GM10248 (cell line): ENCODE measurements at regions of chr11 and their contacts with region 1.

Region 1: DNA sequence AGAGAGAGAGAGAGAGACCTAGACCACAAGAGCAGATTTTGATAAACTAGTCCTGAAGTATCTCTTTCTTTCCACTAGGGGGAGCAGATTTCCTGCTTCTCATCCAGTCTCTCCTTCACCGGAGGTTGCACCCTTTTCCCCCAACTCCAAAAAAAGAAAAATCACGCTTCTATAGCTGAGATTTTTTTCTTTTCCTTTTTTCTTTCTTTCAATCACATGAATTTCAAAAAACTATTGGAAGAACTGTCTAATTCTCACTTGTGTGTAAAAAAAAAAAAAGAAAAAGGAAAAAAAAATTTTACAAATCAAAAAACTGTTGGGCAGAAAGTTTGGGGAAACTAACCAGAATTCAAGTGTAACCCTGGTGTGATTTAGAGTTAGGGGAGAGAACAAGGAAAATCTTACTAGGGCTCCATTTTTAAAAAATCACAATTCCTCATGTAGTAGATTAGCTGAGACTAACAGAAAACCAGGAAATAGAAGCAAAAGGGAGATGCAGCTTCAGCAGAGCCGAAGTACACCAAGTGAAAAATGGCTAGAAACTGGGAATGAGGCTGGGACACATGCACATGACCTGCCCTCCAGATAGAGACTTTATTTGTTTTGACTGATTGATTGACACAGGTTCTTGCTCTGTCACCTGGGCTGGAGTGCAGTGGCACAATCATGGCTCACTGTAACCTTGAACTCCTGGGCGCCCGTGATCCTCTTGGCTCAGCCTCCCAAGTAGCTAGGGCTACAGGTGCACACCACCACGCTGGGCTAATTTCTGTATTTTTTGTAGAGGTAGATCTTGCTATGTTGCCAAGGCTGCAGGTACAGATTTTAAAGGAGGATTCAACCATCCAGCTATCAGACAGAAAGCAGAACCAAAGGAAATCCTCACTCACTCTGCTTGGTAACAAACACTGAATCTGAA is 27.1 kb downstream of the SDHD start:
- DNase-seq: peak; percentile 61
- CTCF ChIP-seq: peak; percentile 61

Region 2: GRCh38 chr11:112074026-112074811 is 39.6 kb before region 1 on chr11 and contains the start of gene NKAPD1:
- CTCF ChIA-PET with region 1: no interaction called
- POLR2A ChIA-PET with region 1: no interaction called
- DNase-seq: peak; percentile 77
- CTCF ChIP-seq: no peak

Region 3: DNA sequence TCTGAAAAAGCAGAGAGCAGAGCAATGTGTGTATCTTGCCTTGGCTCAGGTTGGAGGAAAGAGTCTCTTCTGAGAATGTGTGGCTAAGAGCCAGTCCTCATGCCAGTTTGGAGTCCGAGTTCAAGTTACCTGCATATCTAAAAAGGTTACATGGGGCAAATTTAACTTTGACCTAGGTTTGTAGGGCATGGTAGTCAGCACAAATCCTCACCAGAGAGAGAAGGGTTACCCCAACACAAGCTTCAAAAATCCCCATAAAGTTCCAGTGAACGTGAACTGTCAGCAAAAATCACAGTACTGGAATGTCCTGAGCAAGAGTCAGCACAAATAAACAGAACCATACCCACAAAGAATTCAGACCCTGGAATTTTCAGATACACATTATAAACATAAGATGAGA is 13.3 kb before region 1 on chr11:
- CTCF ChIA-PET with region 1: interaction called, 47 read pairs
- POLR2A ChIA-PET with region 1: no interaction called
- DNase-seq: no peak
- CTCF ChIP-seq: no peak

Region 4: DNA sequence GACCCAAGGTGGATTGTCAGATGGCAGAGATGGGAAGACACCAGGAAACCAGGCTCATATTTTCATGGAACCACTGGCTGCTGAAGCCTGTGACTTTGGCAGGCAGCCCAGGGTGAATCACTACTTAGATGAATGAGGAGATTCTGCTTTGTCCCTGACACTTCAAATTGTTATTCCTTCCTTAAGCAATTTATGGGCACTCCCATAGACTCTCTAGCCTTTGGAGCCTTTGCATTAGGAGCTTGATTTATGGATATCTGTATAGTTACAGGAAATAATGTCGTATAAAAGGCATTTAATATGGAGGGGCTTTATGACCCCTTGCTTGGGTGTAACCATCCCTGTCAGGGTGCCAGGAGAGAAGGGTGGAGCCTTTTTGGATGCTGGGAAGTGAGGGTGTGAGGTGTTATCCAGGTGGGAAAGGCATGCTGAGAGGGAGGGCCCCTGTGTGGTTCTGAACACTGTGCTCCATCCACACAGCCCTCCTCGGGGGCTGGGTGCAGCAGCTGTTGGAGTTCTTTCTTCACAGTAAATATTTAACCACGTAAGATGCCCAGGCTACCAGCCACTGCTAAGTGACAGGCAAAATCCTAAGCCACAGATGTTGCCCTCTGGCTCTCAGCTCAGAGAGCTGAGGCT is 14.8 kb after region 1 on chr11:
- CTCF ChIA-PET with region 1: interaction called, 38 read pairs
- POLR2A ChIA-PET with region 1: no interaction called
- DNase-seq: no peak
- CTCF ChIP-seq: no peak

Region 5: GRCh38 chr11:112134473-112134872 is 20.7 kb after region 1 on chr11:
- CTCF ChIA-PET with region 1: interaction called, 24 read pairs
- POLR2A ChIA-PET with region 1: no interaction called
- DNase-seq: no peak
- CTCF ChIP-seq: no peak

Region 6: DNA sequence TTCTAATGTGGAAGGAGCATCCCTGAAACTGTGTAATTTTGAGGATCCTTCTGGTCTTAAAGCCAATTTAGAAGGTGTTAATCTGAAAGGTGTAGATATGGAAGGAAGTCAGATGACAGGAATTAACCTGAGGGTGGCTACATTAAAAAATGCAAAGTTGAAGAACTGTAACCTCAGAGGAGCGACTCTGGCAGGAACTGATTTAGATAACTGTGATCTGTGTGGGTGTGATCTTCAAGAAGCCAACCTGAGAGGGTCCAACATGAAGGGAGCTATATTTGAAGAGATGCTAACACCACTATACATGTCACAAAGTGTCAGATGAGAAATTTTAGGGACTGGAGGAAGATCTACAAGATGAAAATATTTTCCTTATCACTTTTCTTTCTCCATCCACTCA is 69.1 kb after region 1 on chr11:
- CTCF ChIA-PET with region 1: no interaction called
- POLR2A ChIA-PET with region 1: no interaction called
- DNase-seq: no peak
- CTCF ChIP-seq: no peak

Region 7: DNA sequence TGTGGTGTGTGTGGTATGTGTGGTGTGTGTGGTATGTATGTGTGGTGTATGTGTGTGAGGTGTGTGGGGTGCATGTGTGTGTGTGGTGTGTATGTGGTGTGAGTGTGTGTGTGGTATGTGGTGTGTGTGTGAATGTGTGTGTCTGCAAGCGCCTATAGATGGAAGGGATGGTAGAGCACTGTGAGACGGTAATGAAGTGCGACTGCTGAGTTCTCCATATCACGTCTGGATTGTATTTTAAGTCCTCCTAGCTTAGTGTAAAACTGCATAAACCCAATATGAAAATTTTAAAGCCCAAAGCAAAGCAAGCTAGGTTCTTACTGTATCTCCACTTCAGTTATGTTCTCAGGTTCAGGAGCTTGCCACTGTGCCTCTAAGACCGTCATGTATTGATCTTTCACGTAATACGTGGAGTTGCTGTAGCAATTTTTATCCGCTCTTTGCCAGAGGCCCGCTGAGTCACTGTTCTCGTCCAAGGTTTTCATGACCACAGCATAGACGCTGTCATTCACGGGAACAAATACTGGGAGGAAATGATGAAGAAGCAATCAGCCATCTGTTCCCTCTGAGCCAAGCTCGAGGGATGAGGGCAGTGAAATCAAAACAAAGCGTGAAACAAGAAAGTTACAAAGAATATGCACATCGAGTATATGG is 141.4 kb after region 1 on chr11:
- CTCF ChIA-PET with region 1: no interaction called
- POLR2A ChIA-PET with region 1: no interaction called
- DNase-seq: no peak
- CTCF ChIP-seq: no peak

Region 8: GRCh38 chr11:112289588-112290492 is 176.0 kb after region 1 on chr11:
- CTCF ChIA-PET with region 1: interaction called, 14 read pairs
- POLR2A ChIA-PET with region 1: no interaction called
- DNase-seq: peak; percentile 88
- CTCF ChIP-seq: peak; percentile 90

Region 9: GRCh38 chr11:112334381-112334780 is 220.6 kb after region 1 on chr11:
- CTCF ChIA-PET with region 1: no interaction called
- POLR2A ChIA-PET with region 1: no interaction called
- DNase-seq: no peak
- CTCF ChIP-seq: no peak